CD4-positive, alpha-beta T cell (primary cell): ENCODE measurements at regions of chr1 and their contacts with region 1.

Region 1: GRCh38 chr1:206455666-206456344 is 14.5 kb upstream of the IKBKE start:
- DNase-seq: no peak
- ATAC-seq: no peak
- H3K4me3 ChIP-seq: no peak overlapping the region
- H3K4me3 Mint-ChIP-seq: no peak overlapping the region
- H3K27ac ChIP-seq: no peak overlapping the region
- H3K27ac Mint-ChIP-seq: no peak overlapping the region
- H3K4me1 ChIP-seq: peaks cover 13% of the 10 kb centered on the region
- H3K4me1 Mint-ChIP-seq: no peaks in the 10 kb centered on the region
- H3K27me3 ChIP-seq: no peaks in the 10 kb centered on the region
- H3K27me3 Mint-ChIP-seq: no peaks in the 10 kb centered on the region
- CTCF ChIP-seq: no peak

Region 2: GRCh38 chr1:206143537-206144172 is 312.1 kb before region 1 on chr1:
- CTCF ChIA-PET with region 1: no interaction called
- POLR2A ChIA-PET with region 1: no interaction called
- intact Hi-C with region 1: loop called in 1 of 2 experiments (anchors 10 kb)
- DNase-seq: no peak
- ATAC-seq: no peak
- H3K4me3 ChIP-seq: no peak overlapping the region
- H3K4me3 Mint-ChIP-seq: no peak overlapping the region
- H3K27ac ChIP-seq: no peak overlapping the region
- H3K27ac Mint-ChIP-seq: no peak overlapping the region
- H3K4me1 ChIP-seq: no peaks in the 10 kb centered on the region
- H3K4me1 Mint-ChIP-seq: no peaks in the 10 kb centered on the region
- H3K27me3 ChIP-seq: peaks cover 6 to 18% of the 10 kb centered on the region in 2 experiments
- H3K27me3 Mint-ChIP-seq: peaks cover 15% of the 10 kb centered on the region
- CTCF ChIP-seq: no peak

Region 3: GRCh38 chr1:206540044-206540780 is 84.4 kb after region 1 on chr1:
- CTCF ChIA-PET with region 1: no interaction called
- POLR2A ChIA-PET with region 1: no interaction called
- intact Hi-C with region 1: no loop called
- DNase-seq: no peak
- ATAC-seq: no peak
- H3K4me3 ChIP-seq: no peak overlapping the region
- H3K4me3 Mint-ChIP-seq: no peak overlapping the region
- H3K27ac ChIP-seq: no peak overlapping the region
- H3K27ac Mint-ChIP-seq: no peak overlapping the region
- H3K4me1 ChIP-seq: peaks cover 9% of the 10 kb centered on the region
- H3K4me1 Mint-ChIP-seq: peaks cover 9% of the 10 kb centered on the region
- H3K27me3 ChIP-seq: no peaks in the 10 kb centered on the region
- H3K27me3 Mint-ChIP-seq: no peaks in the 10 kb centered on the region
- CTCF ChIP-seq: no peak